ENCODE measurements at regions of chr11 and their contacts with region 1.

Region 1: GRCh38 chr11:126194121-126194543 is 17.3 kb downstream of the RPUSD4 start:
- DNase-seq: no peak
- H3K4me3 ChIP-seq: no peak overlapping the region
- CTCF ChIP-seq: peak; percentile 36

Region 2: GRCh38 chr11:125923012-125923579 is 271.0 kb before region 1 on chr11:
- CTCF ChIA-PET with region 1: interaction called, 293 read pairs
- POLR2A ChIA-PET with region 1: no interaction called
- DNase-seq: peak; percentile 10
- H3K4me3 ChIP-seq: no peak overlapping the region
- CTCF ChIP-seq: peak; percentile 82

Region 3: GRCh38 chr11:125935618-125936199 is 258.4 kb before region 1 on chr11:
- CTCF ChIA-PET with region 1: interaction called, 293 read pairs
- POLR2A ChIA-PET with region 1: no interaction called
- DNase-seq: no peak
- H3K4me3 ChIP-seq: no peak overlapping the region
- CTCF ChIP-seq: no peak

Region 4: GRCh38 chr11:125941619-125942611 is 252.2 kb before region 1 on chr11:
- CTCF ChIA-PET with region 1: interaction called, 109 read pairs
- POLR2A ChIA-PET with region 1: no interaction called
- DNase-seq: no peak
- H3K4me3 ChIP-seq: no peak overlapping the region
- CTCF ChIP-seq: peak; percentile 77

Region 5: GRCh38 chr11:126211235-126212088 is 17.3 kb after region 1 on chr11 and contains the starts of genes FAM118B and RPUSD4:
- CTCF ChIA-PET with region 1: interaction called, 10 read pairs
- POLR2A ChIA-PET with region 1: interaction called, 7 read pairs
- DNase-seq: peak; percentile 69
- H3K4me3 ChIP-seq: peak within 1 kb of the TSS; percentile 88
- CTCF ChIP-seq: no peak

Measured in AG04449 (cell line).